ENCODE measurements at regions of chr22 and their contacts with region 1.

Region 1: DNA sequence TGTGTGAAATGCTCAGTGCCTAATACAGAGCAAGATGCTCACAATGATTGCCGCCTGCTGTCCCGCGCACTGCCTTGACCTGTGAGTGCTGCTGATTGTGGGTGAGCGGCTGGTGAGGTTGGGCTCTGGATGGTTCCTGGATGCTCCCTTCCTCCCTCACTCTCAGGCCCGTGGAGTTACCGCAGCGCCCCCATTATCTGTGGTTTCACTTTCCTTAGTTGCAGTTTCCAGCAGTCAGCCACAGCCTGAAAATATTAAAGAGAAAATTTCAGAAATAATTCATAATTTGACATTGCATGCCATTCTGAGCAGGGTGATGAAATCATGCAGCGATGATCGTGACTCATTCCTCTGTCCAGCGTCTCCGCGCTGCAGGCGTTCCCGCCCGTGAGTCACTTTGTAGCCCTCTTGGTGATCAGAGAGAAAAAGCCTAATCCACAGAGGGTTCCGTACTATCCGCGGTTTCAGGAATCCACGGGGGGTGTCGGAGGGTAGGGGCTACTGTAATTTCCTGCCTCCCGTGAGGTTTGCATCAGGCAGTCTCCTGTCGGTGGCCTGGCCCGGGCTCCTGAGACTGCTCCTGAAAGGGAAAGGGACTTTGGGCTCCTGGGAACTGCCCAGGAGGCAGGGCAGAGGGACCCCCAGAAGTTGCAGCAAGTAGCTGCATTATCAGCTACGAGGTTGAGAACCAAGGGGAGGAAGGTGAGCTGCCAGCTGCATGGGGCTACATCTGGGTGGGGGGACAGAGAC is 10.6 kb downstream of the RPL3 start:
- DNase-seq: peak; percentile 50 to 92
- H3K4me3 ChIP-seq: peak overlapping the region; percentile 1 to 50
- H3K27ac ChIP-seq: peak overlapping the region; percentile 78 to 80
- H3K4me1 ChIP-seq: peaks cover 0 to 11% of the 10 kb centered on the region in 2 donors
- H3K27me3 ChIP-seq: no peaks in the 10 kb centered on the region
- CTCF ChIP-seq: peak in 1 of 3 experiments; percentile 14

Region 2: GRCh38 chr22:39170825-39171622 is 137.8 kb before region 1 on chr22:
- intact Hi-C with region 1: loop called (anchors 1 kb)
- DNase-seq: peak in 1 of 2 donors; percentile 88
- H3K4me3 ChIP-seq: peak overlapping the region in 1 of 2 donors; percentile 31
- H3K27ac ChIP-seq: no peak overlapping the region
- H3K4me1 ChIP-seq: peaks cover 22 to 23% of the 10 kb centered on the region in 2 donors
- H3K27me3 ChIP-seq: no peaks in the 10 kb centered on the region
- CTCF ChIP-seq: peak; percentile 95 to 98 (median 96)

Measured in ascending aorta (tissue), 2 donors.